Caco-2 (cell line): ENCODE measurements at regions of chr9 and their contacts with region 1.

Region 1: GRCh38 chr9:108850293-108850897 is 5.4 kb downstream of the ACTL7B start:
- DNase-seq: peak in 1 of 2 experiments; percentile 17
- H3K4me3 ChIP-seq: no peak overlapping the region
- H3K4me3 Mint-ChIP-seq: no peak overlapping the region
- H3K27ac Mint-ChIP-seq: no peak overlapping the region
- H3K4me1 ChIP-seq: peaks cover 7% of the 10 kb centered on the region
- H3K4me1 Mint-ChIP-seq: peaks cover 10% of the 10 kb centered on the region
- H3K27me3 ChIP-seq: no peaks in the 10 kb centered on the region
- H3K27me3 Mint-ChIP-seq: no peaks in the 10 kb centered on the region
- CTCF ChIP-seq: peak; percentile 23 to 56

Region 2: GRCh38 chr9:108869092-108869725 is 18.8 kb after region 1 on chr9:
- CTCF ChIA-PET with region 1: no interaction called
- POLR2A ChIA-PET with region 1: no interaction called
- intact Hi-C with region 1: loop called (anchors 1 kb)
- DNase-seq: peak; percentile 74 to 77
- H3K4me3 ChIP-seq: no peak overlapping the region
- H3K4me3 Mint-ChIP-seq: no peak overlapping the region
- H3K27ac Mint-ChIP-seq: peak overlapping the region; percentile 83
- H3K4me1 ChIP-seq: peaks cover 12% of the 10 kb centered on the region
- H3K4me1 Mint-ChIP-seq: peaks cover 21% of the 10 kb centered on the region
- H3K27me3 ChIP-seq: no peaks in the 10 kb centered on the region
- H3K27me3 Mint-ChIP-seq: no peaks in the 10 kb centered on the region
- CTCF ChIP-seq: no peak

Region 3: GRCh38 chr9:108885643-108886348 is 35.4 kb after region 1 on chr9:
- CTCF ChIA-PET with region 1: no interaction called
- POLR2A ChIA-PET with region 1: no interaction called
- intact Hi-C with region 1: no loop called
- DNase-seq: peak in 1 of 2 experiments; percentile 11
- H3K4me3 ChIP-seq: no peak overlapping the region
- H3K4me3 Mint-ChIP-seq: no peak overlapping the region
- H3K27ac Mint-ChIP-seq: no peak overlapping the region
- H3K4me1 ChIP-seq: no peaks in the 10 kb centered on the region
- H3K4me1 Mint-ChIP-seq: no peaks in the 10 kb centered on the region
- H3K27me3 ChIP-seq: no peaks in the 10 kb centered on the region
- H3K27me3 Mint-ChIP-seq: no peaks in the 10 kb centered on the region
- CTCF ChIP-seq: no peak

Region 4: GRCh38 chr9:108903420-108904103 is 53.2 kb after region 1 on chr9:
- CTCF ChIA-PET with region 1: no interaction called
- POLR2A ChIA-PET with region 1: no interaction called
- intact Hi-C with region 1: loop called (anchors 5 kb)
- DNase-seq: no peak
- H3K4me3 ChIP-seq: no peak overlapping the region
- H3K4me3 Mint-ChIP-seq: no peak overlapping the region
- H3K27ac Mint-ChIP-seq: no peak overlapping the region
- H3K4me1 ChIP-seq: no peaks in the 10 kb centered on the region
- H3K4me1 Mint-ChIP-seq: no peaks in the 10 kb centered on the region
- H3K27me3 ChIP-seq: no peaks in the 10 kb centered on the region
- H3K27me3 Mint-ChIP-seq: no peaks in the 10 kb centered on the region
- CTCF ChIP-seq: no peak

Region 5: GRCh38 chr9:108933718-108934322 is 83.4 kb after region 1 on chr9 and contains the start of gene ELP1:
- CTCF ChIA-PET with region 1: no interaction called
- POLR2A ChIA-PET with region 1: no interaction called
- intact Hi-C with region 1: loop called (anchors 5 kb)
- DNase-seq: peak; percentile 95
- H3K4me3 ChIP-seq: peak within 1 kb of the TSS; percentile 98
- H3K4me3 Mint-ChIP-seq: peak within 1 kb of the TSS; percentile 93
- H3K27ac Mint-ChIP-seq: peak within 1 kb of the TSS; percentile 91
- H3K4me1 ChIP-seq: peaks cover 9% of the 10 kb centered on the region
- H3K4me1 Mint-ChIP-seq: peaks cover 16% of the 10 kb centered on the region
- H3K27me3 ChIP-seq: no peaks in the 10 kb centered on the region
- H3K27me3 Mint-ChIP-seq: no peaks in the 10 kb centered on the region
- CTCF ChIP-seq: peak in 1 of 2 experiments; percentile 38
- total RNA-seq, gene ELP1: 27.6 and 29.1 TPM in 2 replicates

Region 6: GRCh38 chr9:108953983-108954574 is 103.7 kb after region 1 on chr9:
- CTCF ChIA-PET with region 1: interaction called, 3 read pairs
- POLR2A ChIA-PET with region 1: no interaction called
- intact Hi-C with region 1: loop called (anchors 1 kb)
- DNase-seq: peak in 1 of 2 experiments; percentile 15
- H3K4me3 ChIP-seq: no peak overlapping the region
- H3K4me3 Mint-ChIP-seq: no peak overlapping the region
- H3K27ac Mint-ChIP-seq: no peak overlapping the region
- H3K4me1 ChIP-seq: no peaks in the 10 kb centered on the region
- H3K4me1 Mint-ChIP-seq: no peaks in the 10 kb centered on the region
- H3K27me3 ChIP-seq: no peaks in the 10 kb centered on the region
- H3K27me3 Mint-ChIP-seq: no peaks in the 10 kb centered on the region
- CTCF ChIP-seq: peak; percentile 53 to 62